Right cardiac atrium (tissue), 5 donors: ENCODE measurements at regions of chr1 and their contacts with region 1.

Region 1: GRCh38 chr1:25895365-25895993 is 10.7 kb downstream of the STMN1 start:
- DNase-seq: peak; percentile 90 to 95 (median 95)
- ATAC-seq: peak; percentile 92 to 94
- H3K4me3 ChIP-seq: no peak overlapping the region
- H3K27ac ChIP-seq: no peak overlapping the region
- H3K4me1 ChIP-seq: peaks cover 1% of the 10 kb centered on the region
- H3K27me3 ChIP-seq: no peaks in the 10 kb centered on the region

Region 2: GRCh38 chr1:25692560-25692959 is 202.9 kb before region 1 on chr1:
- intact Hi-C with region 1: no loop called
- DNase-seq: peak in 1 of 3 donors; percentile 59
- ATAC-seq: no peak
- H3K4me3 ChIP-seq: no peak overlapping the region
- H3K27ac ChIP-seq: no peak overlapping the region
- H3K4me1 ChIP-seq: peaks cover 13% of the 10 kb centered on the region
- H3K27me3 ChIP-seq: no peaks in the 10 kb centered on the region

Region 3: DNA sequence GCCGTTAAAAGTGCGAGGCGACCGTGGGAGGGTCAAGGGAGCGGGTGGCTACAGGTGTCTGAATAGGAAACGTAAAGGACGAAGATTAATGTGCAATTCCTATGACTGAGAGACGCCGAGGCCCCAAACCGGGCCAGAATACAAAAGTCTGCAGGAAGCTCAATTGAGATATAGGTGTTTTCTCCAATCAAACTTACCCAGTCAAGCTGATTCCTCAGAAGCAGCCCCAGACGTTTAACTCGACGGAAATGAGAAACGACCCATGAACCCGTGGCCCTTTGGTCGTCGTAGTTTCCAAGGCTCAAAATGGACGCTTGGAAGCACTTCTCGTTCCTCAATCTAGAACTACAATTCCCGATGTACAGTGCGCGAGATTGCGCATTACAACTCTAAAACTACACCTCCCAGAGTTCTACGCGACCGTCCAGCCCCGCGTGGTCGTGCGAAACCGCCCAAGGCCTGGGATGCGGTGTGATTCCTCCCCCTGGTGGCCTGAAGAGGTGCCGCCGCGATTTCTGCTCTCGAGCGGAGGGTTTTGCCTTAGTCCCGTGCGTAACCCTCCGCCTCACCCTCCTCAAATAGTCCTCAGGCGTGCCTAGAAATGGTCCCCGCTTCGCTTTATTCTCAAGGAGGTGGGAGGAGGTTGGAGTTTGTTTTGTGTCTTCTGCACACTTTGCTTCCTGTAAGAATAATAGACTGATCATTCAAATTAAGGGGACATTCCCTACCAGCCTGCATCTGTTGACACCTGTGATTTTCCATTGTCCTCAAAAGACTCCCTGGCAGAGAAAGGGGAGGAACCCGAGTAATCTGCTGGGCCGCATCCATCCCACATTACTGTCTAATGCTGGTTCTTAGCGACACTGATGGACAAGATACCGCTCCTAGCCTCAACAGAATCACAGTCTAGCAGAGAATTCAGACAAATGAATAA is 102.6 kb after region 1 on chr1 and contains the start of gene PAFAH2:
- intact Hi-C with region 1: loop called (anchors 2 to 5 kb)
- DNase-seq: peak; percentile 98
- ATAC-seq: peak; percentile 99
- H3K4me3 ChIP-seq: peak within 1 kb of the TSS; percentile 55
- H3K27ac ChIP-seq: peak within 1 kb of the TSS; percentile 56
- H3K4me1 ChIP-seq: no peaks in the 10 kb centered on the region
- H3K27me3 ChIP-seq: no peaks in the 10 kb centered on the region
- total RNA-seq, gene PAFAH2: 3.9 to 5.6 (median 4.2) TPM

Region 4: DNA sequence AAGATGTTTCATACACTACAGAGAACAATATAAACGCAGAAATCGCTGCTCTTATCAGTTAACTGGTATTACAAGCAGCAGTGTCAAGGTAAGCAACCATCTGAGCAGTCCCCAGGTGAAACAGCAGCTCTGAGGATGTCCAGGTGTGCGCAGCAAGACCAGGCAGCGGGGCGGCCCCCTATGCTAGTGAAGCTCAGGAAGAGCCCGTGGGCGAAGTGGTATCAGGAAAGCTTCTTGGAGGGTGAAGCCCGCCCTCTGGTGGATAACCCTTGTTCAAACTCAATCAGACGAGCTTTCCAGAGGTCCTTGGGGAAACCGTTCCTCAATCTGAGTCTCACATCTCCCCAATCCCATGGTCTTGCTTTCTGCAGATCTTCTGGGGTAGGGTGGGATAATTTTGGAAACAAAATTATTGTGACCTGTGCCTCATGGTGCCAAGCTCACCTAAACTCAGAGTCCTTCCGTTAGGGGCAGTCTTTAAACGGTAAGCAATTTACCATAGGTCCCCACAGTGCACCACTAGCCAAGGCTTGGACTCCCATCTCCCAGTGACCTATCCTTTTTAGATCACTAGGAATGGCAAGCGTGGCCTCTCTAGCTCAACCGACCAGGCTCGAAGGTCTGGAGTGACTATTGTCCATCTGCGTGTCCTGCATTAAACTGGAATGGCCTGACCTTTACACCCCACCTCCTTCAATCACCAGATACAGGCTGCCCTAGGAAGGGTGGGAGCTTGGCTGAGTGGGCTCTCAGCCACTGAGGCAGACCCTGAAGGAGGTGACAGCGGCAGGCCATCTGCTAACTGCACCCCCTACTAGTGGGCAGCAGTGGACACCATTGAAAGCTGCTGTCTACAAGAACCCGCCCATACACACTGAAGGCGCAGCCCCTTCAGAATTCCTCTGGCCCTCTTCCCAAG is 249.8 kb after region 1 on chr1:
- intact Hi-C with region 1: no loop called
- DNase-seq: peak; percentile 78 to 86 (median 82)
- ATAC-seq: peak; percentile 88 to 92
- H3K4me3 ChIP-seq: no peak overlapping the region
- H3K27ac ChIP-seq: no peak overlapping the region
- H3K4me1 ChIP-seq: no peaks in the 10 kb centered on the region
- H3K27me3 ChIP-seq: no peaks in the 10 kb centered on the region